H1 (cell line): ENCODE measurements at regions of chr2 and their contacts with region 1.

Region 1: DNA sequence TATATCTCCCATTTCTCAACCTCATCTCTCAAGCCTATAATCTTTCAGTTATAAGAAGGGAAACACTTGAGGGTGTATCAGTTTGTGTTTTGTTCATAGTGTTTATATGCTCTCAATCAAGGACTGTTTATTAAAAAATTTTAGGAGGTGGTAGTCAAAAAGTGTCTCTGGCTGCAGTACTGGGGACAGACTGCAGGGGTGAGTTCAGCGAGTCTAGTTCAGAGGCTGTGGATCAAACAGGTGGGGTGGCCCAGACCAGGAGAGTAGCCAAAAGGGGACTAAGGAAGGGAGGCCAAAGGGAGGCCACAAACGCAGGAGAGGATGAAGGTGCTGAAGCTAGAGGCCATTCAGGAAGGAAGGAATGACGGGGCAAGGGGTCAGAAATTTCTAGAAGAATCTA is 136.3 kb downstream of the MSH2 start:
- DNase-seq: no peak
- H3K4me3 ChIP-seq: no peak overlapping the region
- H3K27ac ChIP-seq: no peak overlapping the region
- H3K4me1 ChIP-seq: peaks cover 0 to 7% (median 3%) of the 10 kb centered on the region in 4 experiments; a peak in 4 of 7 replicates
- H3K27me3 ChIP-seq: no peaks in the 10 kb centered on the region
- CTCF ChIP-seq: peak; percentile 22 to 40 (median 28); a peak in 3 of 4 replicates
- EP300 ChIP-seq: no peak
- POLR2A ChIP-seq: no peak
- RAD21 ChIP-seq: peak; percentile 5 to 25; a peak in 2 of 4 replicates

Region 2: DNA sequence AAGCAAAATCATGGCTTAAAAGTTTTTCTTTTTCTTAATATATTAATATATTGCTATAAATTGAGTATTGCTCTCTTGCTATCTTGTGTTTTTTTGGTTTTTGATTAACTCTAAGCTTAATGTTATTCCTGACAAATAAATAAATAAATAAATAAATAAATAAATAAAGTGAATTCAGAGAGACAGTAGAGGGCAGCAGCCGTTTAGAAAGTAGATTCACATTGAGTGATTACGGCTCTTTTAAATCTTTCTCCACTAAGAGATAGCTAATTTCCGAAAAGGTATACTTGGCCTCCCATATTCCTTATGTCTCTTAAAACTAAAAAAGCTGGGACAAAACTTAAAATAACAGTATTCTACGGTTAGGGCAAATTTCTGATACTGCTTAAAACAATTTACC is 101.9 kb before region 1 on chr2:
- CTCF ChIA-PET with region 1: no interaction called
- POLR2A ChIA-PET with region 1: no interaction called
- DNase-seq: no peak
- H3K4me3 ChIP-seq: no peak overlapping the region
- H3K27ac ChIP-seq: no peak overlapping the region
- H3K4me1 ChIP-seq: no peaks in the 10 kb centered on the region
- H3K27me3 ChIP-seq: no peaks in the 10 kb centered on the region
- CTCF ChIP-seq: no peak; a peak in 1 of 4 replicates
- EP300 ChIP-seq: no peak
- POLR2A ChIP-seq: no peak
- RAD21 ChIP-seq: peak; percentile 38 to 47

Region 3: GRCh38 chr2:47520825-47521665 is 18.2 kb before region 1 on chr2:
- CTCF ChIA-PET with region 1: interaction called, 13 read pairs
- POLR2A ChIA-PET with region 1: interaction called, 4 read pairs
- DNase-seq: peak in 1 of 2 experiments; percentile 61
- H3K4me3 ChIP-seq: no peak overlapping the region
- H3K27ac ChIP-seq: no peak overlapping the region
- H3K4me1 ChIP-seq: peaks cover 0 to 9% (median 5%) of the 10 kb centered on the region in 4 experiments; a peak in 5 of 7 replicates
- H3K27me3 ChIP-seq: no peaks in the 10 kb centered on the region
- CTCF ChIP-seq: no peak
- EP300 ChIP-seq: no peak
- POLR2A ChIP-seq: no peak
- RAD21 ChIP-seq: no peak

Region 4: DNA sequence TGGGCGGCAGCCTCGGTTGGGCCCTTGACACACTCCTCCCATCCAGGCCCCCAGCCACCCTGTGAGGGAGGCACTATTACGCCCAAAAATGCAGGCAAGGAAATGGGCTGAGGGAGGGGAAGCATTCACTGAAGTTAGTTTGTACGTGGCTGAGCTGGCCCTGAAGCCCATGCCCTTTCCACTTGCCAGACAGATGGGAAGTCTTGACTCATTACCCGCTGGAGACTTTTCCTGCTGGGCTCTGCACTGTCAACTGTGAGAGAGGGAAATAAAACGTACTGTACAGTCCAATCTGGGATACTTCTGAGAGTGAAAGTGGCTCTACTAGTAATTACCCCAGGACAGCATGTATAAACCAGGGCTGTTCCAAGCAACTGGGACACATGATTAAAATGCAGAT is 10.4 kb before region 1 on chr2:
- CTCF ChIA-PET with region 1: interaction called, 10 read pairs
- POLR2A ChIA-PET with region 1: interaction called, 5 read pairs
- DNase-seq: no peak
- H3K4me3 ChIP-seq: no peak overlapping the region
- H3K27ac ChIP-seq: no peak overlapping the region
- H3K4me1 ChIP-seq: peaks cover 0 to 6% (median 3%) of the 10 kb centered on the region in 4 experiments; a peak in 3 of 7 replicates
- H3K27me3 ChIP-seq: no peaks in the 10 kb centered on the region
- CTCF ChIP-seq: no peak
- EP300 ChIP-seq: no peak
- POLR2A ChIP-seq: no peak
- RAD21 ChIP-seq: no peak

Region 5: GRCh38 chr2:47580855-47581600 is 41.8 kb after region 1 on chr2:
- CTCF ChIA-PET with region 1: no interaction called
- POLR2A ChIA-PET with region 1: no interaction called
- DNase-seq: no peak
- H3K4me3 ChIP-seq: no peak overlapping the region
- H3K27ac ChIP-seq: no peak overlapping the region
- H3K4me1 ChIP-seq: no peaks in the 10 kb centered on the region
- H3K27me3 ChIP-seq: no peaks in the 10 kb centered on the region
- CTCF ChIP-seq: no peak
- EP300 ChIP-seq: no peak
- POLR2A ChIP-seq: no peak
- RAD21 ChIP-seq: no peak